GM12878 (cell line): ENCODE measurements at regions of chr17 and their contacts with region 1.

Region 1: DNA sequence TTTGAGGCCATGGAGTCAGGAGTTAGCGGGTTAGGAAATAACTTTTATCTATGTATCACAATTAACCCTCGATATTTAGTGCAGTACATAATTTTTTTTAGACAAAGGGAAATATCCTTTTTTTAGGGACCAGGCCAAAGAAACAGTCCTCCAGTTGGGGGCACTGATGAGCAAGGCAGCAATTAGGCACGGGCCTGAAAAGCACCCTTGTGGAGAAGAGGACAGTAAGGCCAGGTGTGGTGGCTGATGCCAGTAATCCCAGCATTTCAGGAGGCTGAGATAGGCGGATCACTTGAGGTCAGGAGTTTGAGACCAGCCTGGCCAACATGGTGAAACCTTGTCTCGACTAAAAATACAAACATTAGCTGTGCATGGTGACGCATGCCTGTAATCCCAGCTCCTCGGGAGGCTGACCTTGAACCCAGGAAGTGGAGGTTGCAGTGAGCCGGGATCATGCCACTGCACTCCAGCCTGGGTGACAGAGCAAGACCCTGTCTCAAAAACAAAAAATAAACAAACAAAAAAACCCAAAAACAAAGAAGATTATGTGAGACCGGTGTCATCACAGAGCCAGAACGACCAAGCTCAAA is 158.3 kb upstream of the NOL11 start:
- DNase-seq: no peak
- ATAC-seq: peak; percentile 90
- H3K4me3 ChIP-seq: no peak overlapping the region
- H3K27ac ChIP-seq: no peak overlapping the region
- H3K4me1 ChIP-seq: peaks cover 5% of the 10 kb centered on the region
- H3K27me3 ChIP-seq: no peaks in the 10 kb centered on the region
- CTCF ChIP-seq: peak; percentile 53 to 66 (median 60)
- EP300 ChIP-seq: no peak
- POLR2A ChIP-seq: no peak
- RAD21 ChIP-seq: peak; percentile 65

Region 2: GRCh38 chr17:67245073-67245755 is 314.3 kb before region 1 on chr17 and contains the start of gene HELZ:
- CTCF ChIA-PET with region 1: no interaction called
- POLR2A ChIA-PET with region 1: no interaction called
- RAD21 ChIA-PET with region 1: no interaction called
- SMC1A ChIA-PET with region 1: no interaction called
- in situ Hi-C with region 1: no loop called
- intact Hi-C with region 1: no loop called
- DNase-seq: peak; percentile 25
- ATAC-seq: peak; percentile 77
- H3K4me3 ChIP-seq: peak within 1 kb of the TSS; percentile 88
- H3K27ac ChIP-seq: peak within 1 kb of the TSS; percentile 76
- H3K4me1 ChIP-seq: peaks cover 13% of the 10 kb centered on the region
- H3K27me3 ChIP-seq: no peaks in the 10 kb centered on the region
- CTCF ChIP-seq: no peak
- EP300 ChIP-seq: no peak
- POLR2A ChIP-seq: peak; percentile 65
- RAD21 ChIP-seq: no peak
- polyA plus RNA-seq, gene HELZ: 1.5 to 8.1 TPM

Region 3: DNA sequence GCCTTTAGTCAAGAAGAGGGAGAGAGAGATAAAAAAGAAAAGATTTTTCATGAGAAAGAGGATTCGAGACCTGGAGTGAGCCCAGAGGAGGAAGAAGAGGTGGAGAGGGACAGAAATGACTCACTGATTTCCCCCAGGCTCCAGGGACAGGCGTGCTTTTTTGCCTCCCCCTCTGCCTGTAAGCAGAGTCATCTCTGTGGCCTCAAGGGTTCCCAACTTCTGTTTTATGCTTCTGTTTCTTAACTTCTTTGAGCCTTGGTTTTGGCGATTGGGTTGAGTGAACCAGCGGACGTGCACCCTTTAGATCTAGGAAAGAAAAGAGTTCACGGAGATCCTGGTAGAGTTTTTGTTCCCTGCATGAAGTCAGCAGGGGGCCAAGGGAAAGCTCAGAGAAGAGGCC is 10.4 kb after region 1 on chr17:
- CTCF ChIA-PET with region 1: interaction called, 58 read pairs
- POLR2A ChIA-PET with region 1: interaction called, 14 read pairs
- RAD21 ChIA-PET with region 1: interaction called, 21 read pairs
- SMC1A ChIA-PET with region 1: interaction called, 58 read pairs
- in situ Hi-C with region 1: no loop called
- intact Hi-C with region 1: no loop called
- DNase-seq: peak; percentile 57
- ATAC-seq: peak; percentile 49
- H3K4me3 ChIP-seq: peak overlapping the region; percentile 57
- H3K27ac ChIP-seq: peak overlapping the region; percentile 88
- H3K4me1 ChIP-seq: peaks cover 60% of the 10 kb centered on the region
- H3K27me3 ChIP-seq: no peaks in the 10 kb centered on the region
- CTCF ChIP-seq: no peak
- EP300 ChIP-seq: peak; percentile 58 to 69; a peak in 2 of 4 replicates
- POLR2A ChIP-seq: no peak
- RAD21 ChIP-seq: no peak

Region 4: DNA sequence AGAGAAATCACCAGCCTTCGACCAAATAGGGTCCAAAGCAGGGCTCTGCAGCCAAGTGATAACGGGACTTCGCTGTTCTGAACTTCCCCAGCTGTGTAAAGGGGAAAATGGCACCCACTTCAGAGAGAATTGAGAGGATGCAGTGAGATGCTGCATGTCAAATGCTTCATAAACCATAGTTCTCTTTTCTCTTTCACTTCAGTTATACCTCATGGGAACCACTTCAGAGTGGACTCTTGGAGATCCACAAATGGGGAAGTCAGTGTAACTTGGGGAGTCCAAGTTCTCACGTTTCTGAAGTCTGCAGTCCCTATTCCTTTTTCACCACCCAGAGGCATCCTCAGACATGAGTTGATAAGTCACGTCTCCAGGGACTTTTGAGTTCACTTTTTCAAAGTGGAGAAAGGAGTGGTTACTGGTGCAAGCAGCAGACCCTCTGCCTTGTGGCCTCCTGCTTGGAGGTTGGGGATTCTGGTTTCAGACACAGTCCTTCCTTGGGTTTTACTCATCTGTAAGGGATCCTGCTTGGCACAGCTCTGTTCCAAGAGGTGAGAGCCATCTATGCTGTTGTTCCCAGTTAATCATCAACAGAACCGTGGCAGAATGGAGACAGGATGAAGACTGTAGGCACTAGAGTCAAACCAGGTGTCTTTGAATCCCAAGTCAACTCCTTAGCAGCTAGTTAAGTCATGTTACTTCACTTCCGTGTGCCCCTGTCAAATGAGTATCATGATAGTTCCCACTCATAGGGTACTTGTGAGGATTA is 34.8 kb after region 1 on chr17:
- CTCF ChIA-PET with region 1: interaction called, 16 read pairs
- POLR2A ChIA-PET with region 1: no interaction called
- RAD21 ChIA-PET with region 1: interaction called, 6 read pairs
- SMC1A ChIA-PET with region 1: interaction called, 35 read pairs
- in situ Hi-C with region 1: no loop called
- intact Hi-C with region 1: no loop called
- DNase-seq: peak; percentile 82
- ATAC-seq: peak; percentile 88
- H3K4me3 ChIP-seq: no peak overlapping the region
- H3K27ac ChIP-seq: peak overlapping the region; percentile 82
- H3K4me1 ChIP-seq: peaks cover 20% of the 10 kb centered on the region
- H3K27me3 ChIP-seq: no peaks in the 10 kb centered on the region
- CTCF ChIP-seq: no peak
- EP300 ChIP-seq: peak; percentile 5 to 6; a peak in 1 of 4 replicates
- POLR2A ChIP-seq: no peak
- RAD21 ChIP-seq: peak; percentile 39; the same call in 1 of the 2 replicates

Region 5: DNA sequence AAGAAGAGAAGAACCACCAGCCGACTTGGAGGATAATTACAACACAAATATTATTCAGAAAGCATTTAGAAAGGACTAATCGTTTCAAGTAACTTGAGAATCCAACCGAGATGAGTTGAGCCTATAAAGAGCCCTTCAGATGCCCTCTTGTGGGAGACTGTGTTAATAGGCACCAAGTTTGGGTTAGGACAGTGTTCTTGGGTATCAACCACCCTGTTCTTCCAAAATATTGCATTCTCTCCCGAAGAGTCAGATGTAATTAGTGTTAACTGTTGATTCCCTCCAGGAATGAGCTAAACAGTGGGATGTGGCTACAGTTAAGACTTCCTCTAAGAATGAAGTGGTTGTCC is 70.5 kb after region 1 on chr17:
- CTCF ChIA-PET with region 1: interaction called, 22 read pairs
- POLR2A ChIA-PET with region 1: interaction called, 3 read pairs
- RAD21 ChIA-PET with region 1: interaction called, 6 read pairs
- SMC1A ChIA-PET with region 1: interaction called, 10 read pairs
- in situ Hi-C with region 1: no loop called
- intact Hi-C with region 1: loop called (anchors 1 kb)
- DNase-seq: no peak
- ATAC-seq: peak; percentile 72
- H3K4me3 ChIP-seq: no peak overlapping the region
- H3K27ac ChIP-seq: no peak overlapping the region; the same call in 1 of the 2 replicates
- H3K4me1 ChIP-seq: peaks cover 15% of the 10 kb centered on the region
- H3K27me3 ChIP-seq: no peaks in the 10 kb centered on the region
- CTCF ChIP-seq: peak; percentile 47 to 53 (median 52); a peak in 4 of 6 replicates
- EP300 ChIP-seq: no peak
- POLR2A ChIP-seq: no peak
- RAD21 ChIP-seq: peak; percentile 68